A549 (cell line): ENCODE measurements at regions of chr9 and their contacts with region 1.

Region 1: DNA sequence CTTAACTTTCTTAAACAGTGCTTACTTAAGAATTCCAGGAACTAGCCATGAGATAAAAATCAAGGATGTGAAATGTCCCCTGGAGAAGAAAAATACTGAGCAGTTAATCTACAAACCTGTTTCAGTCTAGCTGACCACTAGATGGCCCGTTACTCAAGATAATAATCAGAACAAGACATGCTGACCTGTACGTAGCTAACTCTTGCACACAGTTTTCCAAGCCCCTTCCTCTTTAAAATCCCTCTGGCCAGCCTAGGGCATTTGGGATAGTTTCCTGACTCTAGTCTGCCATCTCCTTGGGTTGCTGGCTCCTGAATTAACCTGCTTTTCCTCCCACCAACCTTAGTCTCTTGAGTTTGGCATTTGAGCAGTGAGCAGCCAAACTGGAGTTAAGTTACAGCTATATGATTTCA is 59.2 kb upstream of the TRAF1 start:
- DNase-seq: peak; percentile 25 to 77
- ATAC-seq: peak; percentile 89 to 90
- H3K4me3 ChIP-seq: no peak overlapping the region
- H3K27ac ChIP-seq: peak overlapping the region; percentile 31 to 72; a peak in 5 of 6 replicates
- H3K4me1 ChIP-seq: peaks cover 20% of the 10 kb centered on the region; the same call in 2 of the 3 replicates
- CTCF ChIP-seq: peak; percentile 86
- EP300 ChIP-seq: no peak
- POLR2A ChIP-seq: no peak
- RAD21 ChIP-seq: peak; percentile 82 to 84

Region 2: GRCh38 chr9:120960001-120960400 is 25.8 kb before region 1 on chr9:
- CTCF ChIA-PET with region 1: interaction called, 24 read pairs
- POLR2A ChIA-PET with region 1: no interaction called
- DNase-seq: no peak
- ATAC-seq: no peak
- H3K4me3 ChIP-seq: no peak overlapping the region
- H3K27ac ChIP-seq: no peak overlapping the region
- H3K4me1 ChIP-seq: no peaks in the 10 kb centered on the region
- CTCF ChIP-seq: no peak
- EP300 ChIP-seq: no peak
- POLR2A ChIP-seq: no peak
- RAD21 ChIP-seq: no peak

Region 3: DNA sequence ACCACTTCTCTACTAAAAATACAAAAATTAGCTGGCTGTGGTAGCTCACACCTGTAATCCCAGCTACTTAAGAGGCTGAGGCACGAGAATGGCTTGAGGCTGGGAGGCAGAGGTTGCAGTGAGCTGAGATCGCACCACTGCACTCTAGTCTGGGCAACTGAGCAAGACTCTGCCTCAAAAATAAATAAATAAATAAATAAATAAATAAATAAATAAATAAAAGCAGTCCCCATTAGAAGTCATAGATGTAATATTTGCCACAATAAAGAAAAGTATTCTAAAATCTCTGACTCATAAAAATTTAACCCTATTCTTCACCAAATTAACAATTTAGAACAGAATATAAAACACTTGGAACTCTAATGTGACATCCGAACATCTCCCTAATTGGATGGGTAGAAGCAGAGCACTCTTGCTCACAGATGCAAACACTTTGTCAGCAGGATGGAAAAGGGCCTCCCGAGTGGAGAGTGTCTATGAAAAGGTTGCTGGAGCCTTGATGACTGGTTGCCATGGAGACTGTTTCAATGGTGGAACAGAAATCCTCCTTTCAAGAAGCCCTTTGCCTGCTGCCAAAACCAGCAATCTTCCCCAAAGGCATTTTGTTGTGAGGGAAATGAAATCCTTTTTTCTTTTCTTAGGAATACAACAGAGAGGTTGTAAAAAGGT is 20.3 kb before region 1 on chr9:
- CTCF ChIA-PET with region 1: interaction called, 24 read pairs
- POLR2A ChIA-PET with region 1: no interaction called
- DNase-seq: no peak
- ATAC-seq: no peak
- H3K4me3 ChIP-seq: no peak overlapping the region
- H3K27ac ChIP-seq: no peak overlapping the region
- H3K4me1 ChIP-seq: no peaks in the 10 kb centered on the region
- CTCF ChIP-seq: no peak
- EP300 ChIP-seq: no peak
- POLR2A ChIP-seq: no peak
- RAD21 ChIP-seq: no peak

Region 4: DNA sequence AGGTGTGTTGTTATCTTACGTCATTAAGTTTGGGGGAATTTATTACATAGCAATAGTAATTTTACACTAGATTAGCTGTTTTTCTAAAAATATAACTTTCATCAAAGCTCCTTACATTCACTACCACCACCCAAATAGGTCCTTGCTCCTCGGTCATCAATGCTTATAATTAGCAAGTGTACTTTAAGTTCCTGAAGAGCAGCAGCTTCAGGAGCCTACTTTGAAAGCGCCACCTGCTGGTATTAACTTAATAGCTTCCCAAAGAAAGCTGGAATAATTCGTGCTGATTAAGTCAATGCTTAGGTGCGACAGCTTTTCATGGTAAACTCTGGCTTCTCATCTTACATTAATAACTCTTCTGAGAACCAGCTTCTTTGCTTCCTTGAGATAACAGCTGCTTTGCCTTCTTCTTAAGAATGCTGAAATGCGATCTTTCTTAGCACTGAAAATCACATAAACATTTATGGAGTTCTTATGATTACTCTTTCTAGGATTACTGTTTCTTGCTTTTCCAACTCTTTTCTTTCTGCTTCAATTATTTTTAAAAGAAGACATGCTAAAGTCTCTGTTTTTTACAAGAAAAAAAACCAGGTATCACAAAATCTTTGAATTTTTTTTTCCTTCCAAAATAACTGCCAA is 74.3 kb after region 1 on chr9:
- CTCF ChIA-PET with region 1: interaction called, 105 read pairs
- POLR2A ChIA-PET with region 1: no interaction called
- DNase-seq: peak; percentile 71 to 81
- ATAC-seq: peak; percentile 74 to 75; a peak in 3 of 6 replicates
- H3K4me3 ChIP-seq: no peak overlapping the region
- H3K27ac ChIP-seq: peak overlapping the region; percentile 40 to 57; a peak in 5 of 6 replicates
- H3K4me1 ChIP-seq: peaks cover 33% of the 10 kb centered on the region
- CTCF ChIP-seq: peak; percentile 90
- EP300 ChIP-seq: no peak
- POLR2A ChIP-seq: no peak
- RAD21 ChIP-seq: peak; percentile 72 to 74

Region 5: DNA sequence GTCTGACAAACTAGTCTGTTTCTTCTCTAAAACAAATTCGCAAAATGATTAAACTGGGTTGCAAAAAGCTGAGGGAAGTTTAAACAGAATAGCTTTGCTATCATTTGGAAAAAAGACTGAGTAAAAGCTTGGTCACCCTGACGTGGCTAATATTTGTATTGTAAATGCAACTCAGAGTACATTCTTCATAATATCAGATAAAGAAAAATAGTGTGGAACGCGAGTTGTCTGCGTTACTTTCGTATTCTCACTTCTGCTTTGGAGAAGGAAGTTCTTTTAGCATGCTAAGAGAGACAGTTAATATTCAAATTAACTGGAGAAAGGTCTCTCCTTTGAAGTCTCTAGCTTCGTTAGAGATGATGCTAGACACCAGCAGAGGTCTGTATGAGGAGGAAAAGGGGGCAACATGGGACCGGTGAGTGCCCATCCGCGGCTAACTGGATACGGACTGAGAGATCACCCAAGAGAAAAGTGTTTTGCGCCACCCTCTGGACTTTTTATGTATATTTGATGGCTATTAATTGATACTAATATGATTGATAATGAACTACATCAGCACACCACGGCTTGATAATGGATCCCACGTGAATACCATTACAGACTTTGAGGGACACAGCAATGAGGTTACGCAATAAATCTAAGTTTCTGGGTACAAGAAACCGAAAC is 86.1 kb after region 1 on chr9:
- CTCF ChIA-PET with region 1: interaction called, 52 read pairs
- POLR2A ChIA-PET with region 1: no interaction called
- DNase-seq: peak; percentile 71 to 73
- ATAC-seq: peak; percentile 33 to 36; a peak in 3 of 6 replicates
- H3K4me3 ChIP-seq: peak overlapping the region; percentile 50
- H3K27ac ChIP-seq: peak overlapping the region; percentile 74 to 76
- H3K4me1 ChIP-seq: peaks cover 25% of the 10 kb centered on the region
- CTCF ChIP-seq: peak; percentile 75
- EP300 ChIP-seq: no peak
- POLR2A ChIP-seq: no peak
- RAD21 ChIP-seq: peak; percentile 71; a peak in 4 of 5 replicates